ENCODE measurements at regions of chr1 and their contacts with region 1.

Region 1: DNA sequence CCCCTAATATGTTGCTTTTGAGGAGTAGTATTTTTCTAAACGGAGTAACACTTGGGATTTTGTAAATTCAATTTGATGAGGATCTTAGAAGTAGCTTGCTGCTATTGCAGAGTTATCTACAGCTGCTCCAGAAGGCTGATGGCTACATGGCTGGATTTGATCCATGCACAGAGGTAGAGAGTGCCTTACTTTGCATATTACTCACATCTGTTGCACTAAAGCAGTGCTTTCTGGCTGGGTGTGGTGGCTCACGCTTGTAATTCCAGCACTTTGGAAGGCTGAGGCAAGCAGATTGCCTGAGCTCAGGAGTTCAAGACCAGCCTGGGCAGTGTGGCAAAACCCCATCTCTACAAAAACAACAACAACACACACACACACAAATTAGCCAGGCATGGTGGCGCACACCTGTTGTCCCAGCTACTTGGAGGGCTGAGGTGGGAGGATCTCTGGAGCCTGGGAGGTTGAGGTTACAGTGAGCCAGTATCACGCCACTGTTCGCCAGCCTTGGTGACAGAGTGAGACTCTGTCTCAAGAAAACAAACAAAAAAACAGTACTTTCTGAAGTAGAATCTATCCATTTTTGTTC is 24.6 kb downstream of the RALGPS2 start:
- DNase-seq: no peak
- H3K4me3 ChIP-seq: no peak overlapping the region
- H3K4me3 Mint-ChIP-seq: no peak overlapping the region
- H3K27ac ChIP-seq: no peak overlapping the region
- H3K27ac Mint-ChIP-seq: peak overlapping the region in 1 of 7 donors; percentile 54
- H3K4me1 ChIP-seq: no peaks in the 10 kb centered on the region
- H3K4me1 Mint-ChIP-seq: no peaks in the 10 kb centered on the region
- H3K27me3 ChIP-seq: no peaks in the 10 kb centered on the region
- H3K27me3 Mint-ChIP-seq: peaks cover 0 to 2% (median 0%) of the 10 kb centered on the region in 3 donors
- CTCF ChIP-seq: no peak

Region 2: GRCh38 chr1:178506669-178507068 is 243.0 kb before region 1 on chr1:
- intact Hi-C with region 1: no loop called
- DNase-seq: no peak
- H3K4me3 ChIP-seq: no peak overlapping the region
- H3K4me3 Mint-ChIP-seq: no peak overlapping the region
- H3K27ac ChIP-seq: no peak overlapping the region
- H3K27ac Mint-ChIP-seq: peak overlapping the region in 1 of 7 donors; percentile 14
- H3K4me1 ChIP-seq: no peaks in the 10 kb centered on the region
- H3K4me1 Mint-ChIP-seq: peaks cover under 1% of the 10 kb centered on the region
- H3K27me3 ChIP-seq: no peaks in the 10 kb centered on the region
- H3K27me3 Mint-ChIP-seq: peaks cover 0 to 4% (median 2%) of the 10 kb centered on the region in 3 donors
- CTCF ChIP-seq: no peak

Region 3: DNA sequence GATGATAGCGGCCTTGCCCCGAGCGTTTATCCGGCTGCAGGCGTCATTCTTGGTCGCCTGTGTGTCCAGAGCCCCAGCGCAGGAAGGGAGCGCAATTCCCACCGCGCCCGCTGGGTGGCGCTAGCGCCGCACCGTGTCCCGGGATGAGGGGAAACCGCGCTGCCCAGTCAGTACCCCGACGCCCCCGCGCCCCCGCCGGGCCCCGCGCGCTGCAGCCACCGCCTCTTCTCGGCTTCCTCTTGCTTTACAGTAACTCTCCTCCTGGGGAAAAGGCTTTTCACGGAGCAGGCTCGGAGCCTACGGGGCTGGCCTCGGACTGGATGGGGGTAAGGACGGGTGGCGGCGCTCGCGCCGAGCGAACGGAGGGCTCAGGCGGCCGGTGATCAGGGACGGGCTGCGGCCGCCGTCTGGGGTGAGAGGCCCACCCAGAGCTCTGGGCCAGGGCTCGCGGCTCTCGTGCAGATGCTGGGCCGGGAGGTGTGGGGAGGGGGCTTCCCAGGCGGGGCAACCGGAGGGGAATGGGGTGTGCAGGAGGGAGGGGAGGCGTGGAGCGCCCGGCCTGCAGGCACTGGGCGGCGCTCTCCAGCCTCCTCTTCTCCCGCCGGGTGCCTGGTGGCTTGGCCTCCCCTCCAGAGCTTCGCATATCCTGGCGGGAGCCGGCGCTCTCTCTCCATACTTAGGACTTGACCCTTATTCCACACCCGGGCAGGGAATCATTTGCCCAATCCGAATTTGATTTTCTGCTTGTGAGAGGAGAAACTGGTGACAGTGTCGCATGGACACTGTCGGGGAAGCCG is 206.9 kb before region 1 on chr1:
- intact Hi-C with region 1: loop called (anchors 5 kb)
- DNase-seq: peak; percentile 76 to 79 (median 77)
- H3K4me3 ChIP-seq: peak overlapping the region; percentile 60 to 95 (median 95)
- H3K4me3 Mint-ChIP-seq: peak overlapping the region; percentile 94 to 96
- H3K27ac ChIP-seq: peak overlapping the region; percentile 23 to 81
- H3K27ac Mint-ChIP-seq: peak overlapping the region in 6 of 7 donors; percentile 45 to 87 (median 80)
- H3K4me1 ChIP-seq: peaks cover 13 to 20% of the 10 kb centered on the region in 2 donors
- H3K4me1 Mint-ChIP-seq: peaks cover 15% of the 10 kb centered on the region
- H3K27me3 ChIP-seq: no peaks in the 10 kb centered on the region
- H3K27me3 Mint-ChIP-seq: peaks cover 3 to 6% (median 5%) of the 10 kb centered on the region in 3 donors
- CTCF ChIP-seq: peak; percentile 99

Region 4: GRCh38 chr1:178548107-178548506 is 201.6 kb before region 1 on chr1:
- intact Hi-C with region 1: loop called (anchors 5 kb)
- DNase-seq: no peak
- H3K4me3 ChIP-seq: no peak overlapping the region
- H3K4me3 Mint-ChIP-seq: no peak overlapping the region
- H3K27ac ChIP-seq: no peak overlapping the region
- H3K27ac Mint-ChIP-seq: no peak overlapping the region
- H3K4me1 ChIP-seq: peaks cover 3 to 4% of the 10 kb centered on the region in 2 donors
- H3K4me1 Mint-ChIP-seq: peaks cover 8% of the 10 kb centered on the region
- H3K27me3 ChIP-seq: no peaks in the 10 kb centered on the region
- H3K27me3 Mint-ChIP-seq: peaks cover 0 to 5% (median 3%) of the 10 kb centered on the region in 3 donors
- CTCF ChIP-seq: no peak

Region 5: DNA sequence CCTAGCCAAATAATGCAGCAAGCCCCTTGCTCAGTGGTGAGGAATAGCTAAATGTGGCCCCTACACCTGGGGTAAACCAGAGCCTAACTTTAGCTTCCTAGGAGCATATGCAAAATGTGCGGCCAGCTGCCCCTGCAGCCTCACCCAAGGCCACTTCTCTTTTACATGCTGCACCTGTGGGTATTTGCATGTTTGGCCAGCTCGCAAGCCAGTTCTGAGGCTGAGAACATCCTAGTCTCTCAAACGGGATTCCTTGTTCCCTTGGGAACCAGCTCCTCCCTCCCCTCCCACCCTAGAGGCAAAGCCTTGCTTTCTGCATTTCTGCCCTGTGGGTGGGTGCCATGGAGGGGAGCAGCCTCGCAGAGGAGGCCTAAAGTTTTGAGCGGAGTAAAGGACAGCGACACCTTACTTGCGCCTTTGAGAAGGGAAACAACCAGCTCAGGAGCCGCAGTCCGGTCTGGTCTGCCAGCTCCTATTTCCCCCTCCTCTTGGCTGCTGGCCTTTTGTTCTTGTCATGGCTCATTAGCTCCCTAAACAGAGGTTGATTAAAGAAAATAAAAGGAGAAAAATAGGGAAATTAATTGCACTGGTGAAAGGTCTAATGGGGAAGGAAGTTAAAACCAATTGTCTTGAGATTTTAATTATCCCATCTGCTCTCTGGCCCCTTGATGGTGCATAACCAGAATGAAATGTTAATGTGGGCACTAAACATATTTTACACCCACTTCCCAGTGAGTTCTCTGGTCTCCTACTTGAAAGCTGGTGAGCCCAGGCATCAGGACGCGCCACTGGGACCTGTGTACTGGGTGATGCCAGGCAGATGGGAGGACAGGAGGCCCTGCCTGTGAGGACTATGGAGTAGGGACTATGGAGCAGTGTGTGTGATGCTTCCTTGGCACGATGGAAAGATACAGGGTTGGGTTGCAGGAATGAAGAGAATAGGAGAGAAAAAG is 168.0 kb before region 1 on chr1:
- intact Hi-C with region 1: no loop called
- DNase-seq: no peak
- H3K4me3 ChIP-seq: no peak overlapping the region
- H3K4me3 Mint-ChIP-seq: no peak overlapping the region
- H3K27ac ChIP-seq: no peak overlapping the region
- H3K27ac Mint-ChIP-seq: peak overlapping the region in 1 of 7 donors; percentile 58
- H3K4me1 ChIP-seq: no peaks in the 10 kb centered on the region
- H3K4me1 Mint-ChIP-seq: no peaks in the 10 kb centered on the region
- H3K27me3 ChIP-seq: no peaks in the 10 kb centered on the region
- H3K27me3 Mint-ChIP-seq: peaks cover 0 to 3% (median 2%) of the 10 kb centered on the region in 3 donors
- CTCF ChIP-seq: no peak

Region 6: GRCh38 chr1:178706432-178706831 is 43.2 kb before region 1 on chr1:
- intact Hi-C with region 1: no loop called
- DNase-seq: no peak
- H3K4me3 ChIP-seq: no peak overlapping the region
- H3K4me3 Mint-ChIP-seq: no peak overlapping the region
- H3K27ac ChIP-seq: no peak overlapping the region
- H3K27ac Mint-ChIP-seq: no peak overlapping the region
- H3K4me1 ChIP-seq: no peaks in the 10 kb centered on the region
- H3K4me1 Mint-ChIP-seq: peaks cover 3% of the 10 kb centered on the region
- H3K27me3 ChIP-seq: no peaks in the 10 kb centered on the region
- H3K27me3 Mint-ChIP-seq: peaks cover 0 to 6% (median 0%) of the 10 kb centered on the region in 3 donors
- CTCF ChIP-seq: no peak

Measured in CD14-positive monocyte (primary cell).